GM10248 (cell line): ENCODE measurements at regions of chr3 and their contacts with region 1.

Region 1: DNA sequence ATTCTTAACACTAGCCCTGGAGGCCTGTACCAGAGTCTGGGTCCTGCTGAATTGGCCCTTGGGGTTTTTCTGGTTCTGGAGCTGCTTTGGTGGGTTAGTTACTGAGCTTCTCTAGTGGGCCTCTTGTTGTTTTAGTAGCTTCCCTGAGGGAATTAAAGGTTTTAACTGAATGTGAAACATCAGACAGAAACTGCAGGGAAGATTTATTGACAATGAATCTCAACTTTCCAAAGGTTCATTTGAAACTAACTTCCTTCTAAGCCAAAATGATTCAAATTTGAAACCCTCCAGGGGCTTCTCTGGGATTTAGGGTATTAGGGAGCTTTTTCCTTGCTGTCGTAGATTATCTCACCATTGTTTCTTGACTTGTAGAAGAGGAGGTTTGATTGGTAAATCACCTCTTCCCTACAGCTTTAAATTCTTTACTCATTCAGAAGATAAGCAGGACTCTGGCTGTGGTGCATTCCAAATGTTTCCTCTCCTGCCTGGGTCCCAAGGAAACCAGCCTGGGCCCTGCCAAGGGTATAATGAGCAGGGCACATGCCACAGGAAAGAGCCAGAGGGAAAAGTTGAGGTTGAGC is 71.0 kb downstream of the TP63 start:
- DNase-seq: no peak
- CTCF ChIP-seq: no peak

Region 2: GRCh38 chr3:189570916-189571315 is 131.2 kb before region 1 on chr3:
- CTCF ChIA-PET with region 1: no interaction called
- POLR2A ChIA-PET with region 1: no interaction called
- DNase-seq: no peak
- CTCF ChIP-seq: no peak

Region 3: DNA sequence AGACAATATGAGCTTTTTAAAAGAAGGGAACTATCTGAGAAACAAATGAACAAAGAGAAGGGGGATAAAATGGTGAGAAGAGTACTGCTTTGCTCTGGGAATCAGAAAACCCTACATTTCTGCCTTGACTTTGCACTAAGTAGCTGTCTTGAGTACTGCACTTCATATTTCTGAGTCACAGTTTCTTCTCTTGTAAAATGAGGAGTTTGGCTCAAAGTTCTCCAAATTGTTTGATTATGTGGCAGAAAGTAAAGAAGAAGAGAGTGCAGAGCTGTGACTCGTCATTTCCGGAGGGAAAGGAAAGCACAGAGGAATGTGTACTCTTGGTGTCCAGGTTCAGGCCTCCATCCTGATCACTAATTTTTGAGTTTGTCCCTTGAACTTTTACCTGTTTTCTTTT is 16.3 kb before region 1 on chr3:
- CTCF ChIA-PET with region 1: interaction called, 45 read pairs
- POLR2A ChIA-PET with region 1: no interaction called
- DNase-seq: no peak
- CTCF ChIP-seq: no peak

Region 4: GRCh38 chr3:189712906-189713483 is 10.8 kb after region 1 on chr3:
- CTCF ChIA-PET with region 1: interaction called, 14 read pairs
- POLR2A ChIA-PET with region 1: no interaction called
- DNase-seq: no peak
- CTCF ChIP-seq: no peak